ENCODE measurements at regions of chr14 and their contacts with region 1.

Region 1: DNA sequence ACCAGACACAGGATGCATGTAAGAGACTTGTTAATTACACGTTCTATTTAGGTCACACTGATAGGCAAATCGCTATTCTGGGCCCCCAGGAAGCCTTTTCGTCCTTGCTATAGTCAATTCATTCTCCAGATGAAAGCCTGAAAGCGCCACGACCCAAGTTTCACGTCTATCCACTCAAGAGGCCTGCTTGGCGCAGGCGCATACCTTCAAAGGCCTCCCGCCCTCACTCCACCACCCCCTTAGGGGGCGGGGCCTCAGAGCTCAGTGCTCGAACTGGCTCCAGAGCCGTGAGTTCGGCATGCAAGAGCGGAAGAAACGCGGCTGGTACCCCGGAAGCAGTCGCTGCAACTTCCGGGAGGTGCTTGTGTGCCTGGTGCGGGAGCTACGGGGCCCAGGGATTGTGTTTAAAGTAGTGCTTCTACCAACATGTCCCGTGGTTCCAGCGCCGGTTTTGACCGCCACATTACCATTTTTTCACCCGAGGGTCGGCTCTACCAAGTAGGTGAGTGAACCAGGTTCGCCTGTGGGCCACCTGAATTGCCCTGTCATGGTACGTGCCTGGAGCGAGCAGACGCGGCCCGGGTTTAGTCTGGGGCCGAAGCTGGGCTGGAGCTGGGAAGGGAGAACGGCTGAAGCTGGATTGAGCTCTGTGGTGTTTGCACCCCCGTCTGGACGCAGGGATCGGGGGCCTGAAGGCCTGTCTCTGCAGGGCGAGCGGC is at the start of gene PSMA6:
- DNase-seq: peak; percentile 98
- ATAC-seq: peak; percentile 93
- H3K4me3 Mint-ChIP-seq: peak within 1 kb of the TSS; percentile 93
- H3K27ac Mint-ChIP-seq: peak within 1 kb of the TSS; percentile 89
- H3K4me1 Mint-ChIP-seq: peaks cover 30% of the 10 kb centered on the region
- H3K27me3 Mint-ChIP-seq: no peaks in the 10 kb centered on the region
- total RNA-seq, gene PSMA6: 213 to 221 TPM

Region 2: DNA sequence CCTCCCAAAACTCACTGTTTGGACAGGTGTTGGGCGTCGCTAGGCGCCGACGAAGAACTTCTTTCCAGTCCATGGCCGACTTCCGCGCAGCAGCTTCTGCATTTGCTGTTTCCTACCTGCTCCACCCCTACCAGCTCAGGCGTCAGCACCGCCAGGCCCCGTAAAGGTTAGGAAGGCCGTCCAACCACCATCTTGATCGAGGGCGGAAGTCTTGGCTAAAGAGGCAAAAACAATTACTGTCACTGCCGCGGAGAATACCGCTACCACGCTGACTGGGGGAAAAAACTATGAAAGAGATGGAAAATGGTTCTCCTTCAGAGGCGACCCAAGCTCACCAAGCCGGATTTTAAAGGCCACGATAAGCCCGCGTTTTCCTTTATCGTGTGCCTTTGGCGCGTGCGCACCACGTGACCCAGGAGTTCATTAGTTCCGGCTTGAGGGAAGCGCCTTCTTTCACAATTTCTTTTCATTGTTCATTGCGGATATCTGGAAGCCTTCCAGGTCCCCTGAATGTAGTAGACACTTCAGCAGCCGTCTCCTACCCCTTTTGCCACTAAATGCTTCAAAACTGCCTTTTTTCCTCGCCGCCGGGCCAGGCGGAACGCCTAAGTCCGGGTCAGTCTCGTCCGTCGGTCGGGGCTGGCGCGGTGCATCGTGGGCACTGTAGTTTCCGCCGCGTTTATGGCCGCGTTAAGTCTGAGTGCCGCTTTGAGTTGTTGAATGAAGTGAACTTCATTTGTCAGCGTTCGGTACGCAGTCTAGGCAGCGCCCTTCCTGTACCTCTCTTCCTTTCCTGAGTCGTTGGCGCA is 170.1 kb before region 1 on chr14 and contains the starts of genes PPP2R3C and PRORP:
- POLR2A ChIA-PET with region 1: interaction called, 14 read pairs
- DNase-seq: peak; percentile 86
- ATAC-seq: peak; percentile 91
- H3K4me3 Mint-ChIP-seq: peak within 1 kb of the TSS; percentile 96
- H3K27ac Mint-ChIP-seq: peak within 1 kb of the TSS; percentile 99
- H3K4me1 Mint-ChIP-seq: peaks cover 40% of the 10 kb centered on the region
- H3K27me3 Mint-ChIP-seq: no peaks in the 10 kb centered on the region
- total RNA-seq, gene PPP2R3C: 34.0 to 39.1 TPM
- total RNA-seq, gene PRORP: 27.8 to 30.2 TPM

Region 3: DNA sequence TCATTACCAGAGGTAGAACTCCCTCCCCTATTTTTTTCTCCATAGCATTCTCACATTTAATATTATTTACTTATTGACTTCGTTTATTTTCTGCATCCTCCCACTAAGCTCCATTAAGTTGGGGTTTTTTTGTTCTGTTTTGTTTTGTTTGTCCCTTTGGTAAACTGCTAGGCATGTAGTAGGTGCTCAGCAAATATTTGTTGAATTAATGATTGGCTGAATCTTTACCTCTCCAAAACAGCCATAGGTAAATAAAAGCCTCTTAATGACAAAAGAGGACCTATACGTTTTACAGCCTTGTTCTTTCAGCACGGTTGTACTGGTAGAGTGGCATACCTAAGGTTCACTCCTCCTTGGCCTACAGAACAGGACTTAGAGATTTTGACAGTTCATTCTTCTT is 117.9 kb before region 1 on chr14:
- POLR2A ChIA-PET with region 1: no interaction called
- DNase-seq: no peak
- ATAC-seq: no peak
- H3K4me3 Mint-ChIP-seq: no peak overlapping the region
- H3K27ac Mint-ChIP-seq: no peak overlapping the region
- H3K4me1 Mint-ChIP-seq: no peaks in the 10 kb centered on the region
- H3K27me3 Mint-ChIP-seq: no peaks in the 10 kb centered on the region

Region 4: GRCh38 chr14:35304812-35305462 is 12.7 kb after region 1 on chr14:
- POLR2A ChIA-PET with region 1: interaction called, 11 read pairs
- DNase-seq: no peak
- ATAC-seq: no peak
- H3K4me3 Mint-ChIP-seq: no peak overlapping the region
- H3K27ac Mint-ChIP-seq: no peak overlapping the region
- H3K4me1 Mint-ChIP-seq: peaks cover 35% of the 10 kb centered on the region
- H3K27me3 Mint-ChIP-seq: no peaks in the 10 kb centered on the region

Region 5: GRCh38 chr14:35331605-35332516 is 39.7 kb after region 1 on chr14:
- POLR2A ChIA-PET with region 1: interaction called, 21 read pairs
- DNase-seq: no peak
- ATAC-seq: no peak
- H3K4me3 Mint-ChIP-seq: no peak overlapping the region
- H3K27ac Mint-ChIP-seq: peak overlapping the region; percentile 87
- H3K4me1 Mint-ChIP-seq: peaks cover 29% of the 10 kb centered on the region
- H3K27me3 Mint-ChIP-seq: no peaks in the 10 kb centered on the region

Region 6: DNA sequence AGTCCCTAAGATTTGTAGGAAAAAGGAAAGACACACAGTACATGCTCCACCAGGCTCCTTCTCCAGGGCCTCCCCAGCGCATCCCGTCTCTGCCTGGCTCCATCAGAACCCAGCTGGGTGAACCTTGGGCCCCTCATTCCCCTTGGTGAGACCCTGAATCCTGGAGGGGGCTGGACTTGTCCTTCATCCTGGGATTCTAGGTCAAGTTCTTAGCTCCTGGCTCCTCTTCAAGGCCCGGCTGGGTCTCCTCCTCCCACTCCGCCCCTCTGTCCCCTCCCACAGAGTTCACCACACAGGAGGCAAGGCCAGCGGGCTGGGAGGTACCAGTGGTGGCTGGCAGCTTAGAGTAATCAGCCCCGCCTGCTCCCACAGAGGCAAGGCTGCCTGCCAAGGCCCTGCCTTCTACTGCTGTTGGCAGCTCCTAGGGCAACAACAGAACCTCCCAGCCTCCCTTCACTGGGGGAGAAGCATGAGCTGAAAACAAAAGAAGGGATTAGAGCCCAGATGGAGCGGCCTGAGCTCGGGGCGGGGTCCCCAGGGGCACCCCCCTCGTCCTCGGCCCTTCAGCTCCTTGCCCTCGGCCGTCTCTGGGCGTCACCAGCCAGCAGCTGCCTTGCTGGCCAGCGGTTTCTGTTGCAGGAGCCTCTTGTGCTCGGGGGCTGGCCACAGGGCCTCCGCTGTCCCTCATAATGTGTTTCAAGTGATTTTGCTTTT is 49.4 kb after region 1 on chr14:
- POLR2A ChIA-PET with region 1: interaction called, 11 read pairs
- DNase-seq: no peak
- ATAC-seq: peak; percentile 51
- H3K4me3 Mint-ChIP-seq: peak overlapping the region; percentile 13
- H3K27ac Mint-ChIP-seq: peak overlapping the region; percentile 79
- H3K4me1 Mint-ChIP-seq: peaks cover 31% of the 10 kb centered on the region
- H3K27me3 Mint-ChIP-seq: no peaks in the 10 kb centered on the region

Region 7: DNA sequence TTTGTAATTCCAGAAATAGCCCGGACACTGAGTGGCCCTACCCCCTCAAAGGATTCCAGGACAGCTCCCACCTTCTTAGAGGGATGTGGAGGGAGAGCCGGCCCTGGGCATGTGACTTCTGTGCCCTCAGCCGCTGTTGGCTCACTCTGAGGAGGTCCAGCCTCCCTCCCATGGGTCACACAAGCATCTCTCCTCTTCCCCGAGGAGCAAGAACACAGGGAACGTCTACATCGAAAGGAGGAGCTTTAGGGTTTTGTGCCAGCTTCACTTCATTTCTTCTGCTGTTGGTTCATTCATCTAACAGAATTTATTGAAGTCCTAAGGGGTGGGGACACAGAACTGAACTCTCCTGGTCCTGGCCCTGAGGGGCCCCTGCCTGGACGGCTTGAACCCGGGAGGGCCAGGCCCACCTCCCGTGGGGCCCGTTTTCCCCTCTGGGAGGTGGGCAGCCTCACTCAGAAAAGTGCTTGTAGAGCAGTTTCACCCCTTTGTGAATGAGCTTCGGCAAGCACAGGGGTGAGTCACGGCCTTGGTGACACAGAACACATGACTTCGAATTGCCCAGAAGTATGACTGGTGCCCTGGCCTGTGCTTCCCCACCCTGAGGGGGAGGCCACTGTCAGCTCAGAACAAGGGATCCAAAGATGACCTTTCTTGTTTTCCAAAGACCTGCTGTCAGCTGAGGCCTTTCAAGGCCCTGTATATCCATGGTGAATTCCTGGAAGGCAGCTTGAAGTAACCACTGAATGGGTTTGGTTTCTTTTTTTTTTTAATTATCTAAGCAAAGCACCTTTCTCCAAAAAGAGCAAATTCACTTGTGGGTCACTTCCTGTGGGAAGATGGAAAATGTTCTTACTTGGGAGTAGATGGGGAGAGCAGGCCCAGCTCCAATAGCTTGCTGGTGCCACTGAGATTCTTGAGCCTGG is 73.2 kb after region 1 on chr14:
- POLR2A ChIA-PET with region 1: interaction called, 37 read pairs
- DNase-seq: peak; percentile 51
- ATAC-seq: peak; percentile 58
- H3K4me3 Mint-ChIP-seq: peak overlapping the region; percentile 7
- H3K27ac Mint-ChIP-seq: peak overlapping the region; percentile 71
- H3K4me1 Mint-ChIP-seq: peaks cover 39% of the 10 kb centered on the region
- H3K27me3 Mint-ChIP-seq: no peaks in the 10 kb centered on the region

Measured in activated naive CD8-positive, alpha-beta T cell treated with anti-CD3 and anti-CD28 coated beads, Interleukin-2, amount 10 ng/mL, durations not matched to agents 7 days and 5 days (primary cell).